Endothelial cell of umbilical vein (primary cell): ENCODE measurements at regions of chr14 and their contacts with region 1.

Region 1: GRCh38 chr14:95185033-95185766 is 27.9 kb upstream of the DICER1 start:
- DNase-seq: peak; percentile 63
- H3K4me3 ChIP-seq: no peak overlapping the region
- H3K27ac ChIP-seq: peak overlapping the region; percentile 27
- H3K4me1 ChIP-seq: peaks cover 38% of the 10 kb centered on the region
- H3K27me3 ChIP-seq: no peaks in the 10 kb centered on the region
- CTCF ChIP-seq: no peak
- POLR2A ChIP-seq: no peak

Region 2: DNA sequence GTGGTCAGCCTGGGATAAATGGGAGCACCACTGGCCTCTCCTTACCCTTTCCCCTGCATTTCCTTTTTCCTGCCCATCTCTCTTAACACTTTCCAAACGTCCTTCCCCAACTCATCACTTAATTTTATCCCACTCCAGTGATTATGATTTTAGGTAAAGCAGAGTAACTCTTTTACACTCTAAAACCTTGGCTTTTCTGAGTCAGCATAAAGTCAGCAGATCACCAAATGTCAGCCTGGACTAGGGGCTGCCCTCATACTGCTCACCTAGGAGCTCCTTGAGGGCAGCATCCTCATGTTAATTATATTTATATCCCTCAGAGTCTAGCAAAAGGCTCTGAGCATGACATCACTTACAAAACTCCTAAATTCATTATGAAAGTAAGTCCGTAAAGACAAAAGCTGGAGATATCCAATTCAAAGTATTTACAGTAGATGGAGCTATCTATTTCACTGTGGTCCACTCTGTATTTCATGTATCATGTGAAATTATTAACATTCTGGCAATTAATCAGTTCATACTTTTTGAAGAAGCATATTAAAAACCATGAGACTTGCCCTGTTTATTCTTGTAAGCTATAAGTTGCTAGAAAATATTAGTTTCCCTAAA is 10.9 kb before region 1 on chr14:
- CTCF ChIA-PET with region 1: interaction called, 19 read pairs
- POLR2A ChIA-PET with region 1: no interaction called
- dilution Hi-C with region 1: no loop called
- intact Hi-C with region 1: no loop called
- DNase-seq: peak; percentile 49
- H3K4me3 ChIP-seq: no peak overlapping the region
- H3K27ac ChIP-seq: no peak overlapping the region
- H3K4me1 ChIP-seq: peaks cover 11% of the 10 kb centered on the region
- H3K27me3 ChIP-seq: peaks cover 4 to 6% of the 10 kb centered on the region in 2 experiments
- CTCF ChIP-seq: no peak
- POLR2A ChIP-seq: no peak

Region 3: DNA sequence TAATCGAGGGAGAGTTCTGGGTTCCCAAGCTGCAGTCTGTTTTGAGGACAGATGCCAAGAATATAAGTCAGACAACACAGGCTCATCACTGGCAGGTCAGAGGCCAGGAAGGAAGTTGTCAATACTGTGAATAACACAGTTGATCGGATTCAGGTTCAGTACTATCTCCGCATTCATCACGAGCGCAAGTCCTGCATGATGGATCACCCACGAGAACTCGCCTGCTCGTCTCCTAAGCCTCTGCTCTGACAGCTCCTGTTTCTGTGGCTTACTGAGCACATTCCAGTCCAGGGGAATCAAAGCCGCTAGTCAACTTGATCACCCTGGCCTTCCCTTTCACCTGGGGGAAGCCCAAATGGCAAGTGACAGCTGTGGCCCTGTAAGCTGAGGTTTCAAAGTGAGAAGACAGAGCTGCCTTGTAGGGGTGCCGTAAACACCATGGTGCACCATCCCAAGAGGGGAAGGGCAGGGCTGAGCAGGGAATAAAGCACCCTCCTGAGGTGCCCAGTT is 32.2 kb after region 1 on chr14:
- CTCF ChIA-PET with region 1: no interaction called
- POLR2A ChIA-PET with region 1: no interaction called
- dilution Hi-C with region 1: no loop called
- intact Hi-C with region 1: no loop called
- DNase-seq: no peak
- H3K4me3 ChIP-seq: no peak overlapping the region
- H3K27ac ChIP-seq: no peak overlapping the region
- H3K4me1 ChIP-seq: no peaks in the 10 kb centered on the region
- H3K27me3 ChIP-seq: no peaks in the 10 kb centered on the region
- CTCF ChIP-seq: no peak
- POLR2A ChIP-seq: no peak

Region 4: GRCh38 chr14:95319312-95320021 is 134.3 kb after region 1 on chr14 and contains the start of gene CLMN:
- CTCF ChIA-PET with region 1: no interaction called
- POLR2A ChIA-PET with region 1: no interaction called
- dilution Hi-C with region 1: no loop called
- intact Hi-C with region 1: loop called (anchors 5 kb)
- DNase-seq: peak; percentile 25
- H3K4me3 ChIP-seq: peak within 1 kb of the TSS; percentile 45 to 75 (median 50)
- H3K27ac ChIP-seq: no peak within 1 kb of the TSS
- H3K4me1 ChIP-seq: peaks cover 3% of the 10 kb centered on the region
- H3K27me3 ChIP-seq: peaks cover 2% of the 10 kb centered on the region in 2 experiments
- CTCF ChIP-seq: no peak
- POLR2A ChIP-seq: no peak
- total RNA-seq, gene CLMN: 8.4 and 9.6 TPM in 2 replicates